IMR-90 (cell line): ENCODE measurements at regions of chr10 and their contacts with region 1.

Region 1: DNA sequence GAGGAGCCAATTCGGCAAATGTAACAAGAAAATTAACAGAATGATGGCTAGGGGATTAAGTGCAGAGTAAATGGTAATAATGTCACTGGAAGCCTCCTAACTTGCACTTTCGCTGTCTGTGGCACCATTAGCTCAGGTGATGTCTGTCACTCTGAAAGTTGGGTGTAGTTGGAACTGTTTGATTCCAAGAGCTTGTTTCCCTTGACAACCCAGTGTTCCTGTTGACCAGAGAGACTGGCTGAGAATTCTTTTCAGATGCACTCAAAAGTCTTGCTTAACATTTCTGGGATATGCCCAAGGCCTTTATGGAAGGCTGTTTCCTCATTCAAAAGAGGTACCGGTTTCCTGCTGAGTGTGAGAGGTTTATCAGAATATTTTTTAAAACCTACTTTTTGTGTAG is 49.6 kb downstream of the PLPP4 start:
- DNase-seq: no peak
- ATAC-seq: no peak
- H3K4me3 ChIP-seq: no peak overlapping the region
- H3K27ac ChIP-seq: no peak overlapping the region
- H3K4me1 ChIP-seq: no peaks in the 10 kb centered on the region
- H3K27me3 ChIP-seq: no peaks in the 10 kb centered on the region
- CTCF ChIP-seq: no peak
- POLR2A ChIP-seq: no peak
- RAD21 ChIP-seq: no peak

Region 2: GRCh38 chr10:120517881-120518484 is 11.3 kb after region 1 on chr10:
- CTCF ChIA-PET with region 1: no interaction called
- POLR2A ChIA-PET with region 1: interaction called, 28 read pairs
- dilution Hi-C with region 1: no loop called
- in situ Hi-C with region 1: no loop called
- intact Hi-C with region 1: no loop called
- DNase-seq: no peak
- ATAC-seq: no peak
- H3K4me3 ChIP-seq: no peak overlapping the region
- H3K27ac ChIP-seq: no peak overlapping the region
- H3K4me1 ChIP-seq: no peaks in the 10 kb centered on the region
- H3K27me3 ChIP-seq: no peaks in the 10 kb centered on the region
- CTCF ChIP-seq: no peak
- POLR2A ChIP-seq: no peak
- RAD21 ChIP-seq: no peak